ENCODE measurements at regions of chr1 and their contacts with region 1.

Region 1: DNA sequence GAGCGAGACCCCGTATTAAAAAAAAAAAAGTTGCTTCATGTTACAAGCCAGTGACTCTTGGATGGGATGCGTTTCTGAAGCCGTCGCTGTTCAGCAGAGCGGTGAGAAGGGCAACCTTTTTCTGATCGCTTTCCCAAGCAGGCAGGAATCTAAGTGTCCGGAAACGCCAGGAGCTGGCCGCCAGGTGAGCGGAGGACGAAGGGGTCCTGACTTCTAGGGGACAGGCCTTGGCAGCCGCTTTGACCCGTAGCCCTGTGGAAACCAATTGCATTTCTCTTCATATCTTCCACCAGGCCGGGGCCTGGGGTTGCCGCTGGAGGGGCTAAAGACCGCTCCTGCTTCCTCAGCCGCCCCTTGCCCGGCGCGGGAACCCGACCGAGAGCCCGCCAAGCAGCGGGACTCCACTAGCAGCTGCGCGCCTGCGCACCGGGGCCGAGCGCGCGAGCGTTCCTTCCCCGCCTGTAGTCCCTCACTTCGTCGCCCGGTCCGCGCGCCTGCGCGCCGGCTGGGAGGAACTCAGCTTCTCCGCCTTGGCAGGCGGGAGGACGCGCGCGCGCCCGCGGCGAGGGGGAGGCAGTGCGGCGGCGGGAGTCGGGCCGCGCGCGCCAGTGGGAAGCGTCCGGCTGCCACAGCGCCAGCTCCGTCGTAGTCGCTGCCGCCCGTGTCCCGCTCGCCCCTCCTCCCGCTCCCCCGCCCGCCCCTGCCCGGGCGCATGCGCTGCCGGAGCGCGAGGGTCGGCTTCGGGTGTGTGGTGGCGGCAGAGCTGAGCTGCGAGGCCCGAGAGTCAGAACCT is at the start of gene SPEN:
- DNase-seq: peak; percentile 91 to 99 (median 98)
- ATAC-seq: peak; percentile 83
- H3K4me3 ChIP-seq: peak within 1 kb of the TSS; percentile 98
- H3K4me3 Mint-ChIP-seq: peak within 1 kb of the TSS; percentile 97
- H3K27ac ChIP-seq: peak within 1 kb of the TSS; percentile 90 to 92
- H3K27ac Mint-ChIP-seq: peak within 1 kb of the TSS; percentile 96
- H3K4me1 ChIP-seq: peaks cover 42% of the 10 kb centered on the region
- H3K4me1 Mint-ChIP-seq: peaks cover 55% of the 10 kb centered on the region
- H3K27me3 ChIP-seq: no peaks in the 10 kb centered on the region
- H3K27me3 Mint-ChIP-seq: no peaks in the 10 kb centered on the region
- CTCF ChIP-seq: no peak
- total RNA-seq, gene SPEN: 73.5 to 76.7 TPM

Region 2: DNA sequence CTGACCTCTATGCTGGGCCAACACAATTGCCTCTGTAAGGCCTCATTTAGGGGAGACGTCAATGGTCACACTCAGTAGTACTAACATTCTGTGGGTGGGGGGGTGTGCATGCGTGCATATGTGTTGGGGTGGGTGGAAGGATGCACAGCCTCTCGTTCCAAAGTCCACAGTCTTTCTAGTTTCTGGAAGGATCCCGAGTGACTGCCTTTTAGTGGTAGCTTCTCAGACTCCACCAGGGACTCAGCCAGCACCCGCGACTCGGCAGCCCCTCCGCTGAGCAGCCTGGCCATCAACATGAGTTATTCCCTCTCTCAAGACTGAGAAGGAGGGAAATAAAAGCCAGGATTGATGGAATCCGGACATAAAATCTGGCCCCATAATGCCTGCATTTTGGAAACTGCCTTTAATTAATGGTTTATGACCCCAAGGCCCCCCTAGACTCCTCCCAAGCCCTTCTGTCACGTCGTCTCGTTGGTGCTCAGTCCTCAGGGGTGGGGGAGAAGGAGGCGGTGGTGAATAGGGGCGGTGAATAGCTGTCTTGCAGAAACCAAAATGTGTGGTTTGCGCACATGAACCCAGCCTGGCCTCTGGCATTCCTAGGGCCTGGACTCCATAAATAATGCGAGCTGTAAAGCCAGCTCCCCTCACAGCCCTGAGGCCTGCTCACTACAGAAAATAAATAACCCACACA is 758.9 kb before region 1 on chr1:
- CTCF ChIA-PET with region 1: no interaction called
- POLR2A ChIA-PET with region 1: no interaction called
- intact Hi-C with region 1: no loop called
- DNase-seq: no peak
- ATAC-seq: no peak
- H3K4me3 ChIP-seq: no peak overlapping the region
- H3K4me3 Mint-ChIP-seq: no peak overlapping the region
- H3K27ac ChIP-seq: no peak overlapping the region
- H3K27ac Mint-ChIP-seq: no peak overlapping the region
- H3K4me1 ChIP-seq: peaks cover 7% of the 10 kb centered on the region
- H3K4me1 Mint-ChIP-seq: peaks cover 5% of the 10 kb centered on the region
- H3K27me3 ChIP-seq: peaks cover 0 to 5% of the 10 kb centered on the region in 2 experiments
- H3K27me3 Mint-ChIP-seq: no peaks in the 10 kb centered on the region
- CTCF ChIP-seq: no peak

Region 3: DNA sequence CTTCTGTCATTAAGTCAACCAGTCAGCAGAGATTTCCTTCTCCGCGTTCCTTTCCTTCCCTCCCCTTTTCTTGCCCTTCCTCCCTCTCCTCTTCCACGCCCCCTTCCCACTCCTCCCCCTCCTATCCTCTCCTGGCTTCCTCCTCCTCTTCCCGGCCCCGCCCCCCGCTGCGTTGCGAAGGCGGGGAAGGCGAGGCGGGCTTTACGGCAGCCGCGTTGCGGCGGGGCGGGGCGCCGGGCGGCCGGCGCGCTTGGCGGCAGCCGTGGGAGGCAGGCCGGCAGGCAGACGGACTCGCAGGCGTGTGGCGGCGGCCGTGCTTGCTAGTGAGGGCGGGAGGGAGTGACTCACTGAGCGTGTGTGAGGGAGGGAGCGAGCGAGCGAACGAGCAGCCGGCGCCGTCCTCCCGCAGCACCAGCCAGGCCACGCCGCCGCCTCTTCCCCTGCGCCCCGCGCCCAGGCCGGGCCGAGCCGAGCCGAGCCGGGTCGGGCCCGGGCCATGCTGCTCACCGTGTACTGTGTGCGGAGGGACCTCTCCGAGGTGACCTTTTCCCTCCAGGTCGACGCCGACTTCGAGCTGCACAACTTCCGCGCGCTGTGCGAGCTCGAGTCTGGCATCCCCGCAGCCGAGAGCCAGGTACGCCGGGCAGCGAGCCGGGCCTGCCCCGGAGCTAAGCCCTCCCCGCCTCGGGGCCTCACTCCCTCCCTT is 230.0 kb before region 1 on chr1 and contains the start of gene DDI2:
- CTCF ChIA-PET with region 1: no interaction called
- POLR2A ChIA-PET with region 1: no interaction called
- intact Hi-C with region 1: no loop called
- DNase-seq: peak; percentile 84 to 97 (median 91)
- ATAC-seq: peak; percentile 90
- H3K4me3 ChIP-seq: peak within 1 kb of the TSS; percentile 91
- H3K4me3 Mint-ChIP-seq: peak within 1 kb of the TSS; percentile 97
- H3K27ac ChIP-seq: peak within 1 kb of the TSS; percentile 80 to 91
- H3K27ac Mint-ChIP-seq: peak within 1 kb of the TSS; percentile 89
- H3K4me1 ChIP-seq: peaks cover 45% of the 10 kb centered on the region
- H3K4me1 Mint-ChIP-seq: peaks cover 51% of the 10 kb centered on the region
- H3K27me3 ChIP-seq: no peaks in the 10 kb centered on the region
- H3K27me3 Mint-ChIP-seq: no peaks in the 10 kb centered on the region
- CTCF ChIP-seq: no peak
- total RNA-seq, gene DDI2: 24.2 to 29.9 TPM

Region 4: GRCh38 chr1:15820478-15820877 is 26.8 kb before region 1 on chr1:
- CTCF ChIA-PET with region 1: interaction called, 32 read pairs
- POLR2A ChIA-PET with region 1: interaction called, 25 read pairs
- intact Hi-C with region 1: loop called (anchors 2 to 5 kb)
- DNase-seq: no peak
- ATAC-seq: no peak
- H3K4me3 ChIP-seq: no peak overlapping the region
- H3K4me3 Mint-ChIP-seq: no peak overlapping the region
- H3K27ac ChIP-seq: no peak overlapping the region
- H3K27ac Mint-ChIP-seq: no peak overlapping the region
- H3K4me1 ChIP-seq: peaks cover 5% of the 10 kb centered on the region
- H3K4me1 Mint-ChIP-seq: peaks cover 4% of the 10 kb centered on the region
- H3K27me3 ChIP-seq: no peaks in the 10 kb centered on the region
- H3K27me3 Mint-ChIP-seq: no peaks in the 10 kb centered on the region
- CTCF ChIP-seq: no peak

Region 5: DNA sequence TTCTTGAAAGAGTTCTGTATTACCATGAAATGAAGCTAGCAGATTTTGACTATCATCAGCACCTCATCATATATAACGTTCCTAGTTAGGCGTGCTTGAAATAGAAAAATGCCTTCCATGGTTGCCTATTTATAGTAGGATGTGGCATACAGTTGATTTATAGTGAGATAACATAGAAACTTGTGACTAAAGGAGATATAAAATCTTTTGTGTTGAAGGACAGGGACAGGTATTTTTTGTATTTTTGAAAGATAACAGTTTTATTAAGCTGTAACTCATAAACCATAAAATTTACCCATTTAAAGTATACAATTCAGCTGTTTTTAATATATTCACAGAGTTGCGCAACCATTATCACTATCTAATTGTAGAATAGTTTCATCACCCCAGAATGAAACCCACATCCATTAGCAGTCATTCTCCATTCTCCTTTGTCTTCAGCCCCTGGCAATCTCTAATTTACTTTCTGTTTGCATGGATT is 19.5 kb after region 1 on chr1:
- CTCF ChIA-PET with region 1: no interaction called
- POLR2A ChIA-PET with region 1: interaction called, 19 read pairs
- intact Hi-C with region 1: no loop called
- DNase-seq: no peak
- ATAC-seq: no peak
- H3K4me3 ChIP-seq: no peak overlapping the region
- H3K4me3 Mint-ChIP-seq: no peak overlapping the region
- H3K27ac ChIP-seq: no peak overlapping the region
- H3K27ac Mint-ChIP-seq: no peak overlapping the region
- H3K4me1 ChIP-seq: peaks cover 19% of the 10 kb centered on the region
- H3K4me1 Mint-ChIP-seq: peaks cover 63% of the 10 kb centered on the region
- H3K27me3 ChIP-seq: no peaks in the 10 kb centered on the region
- H3K27me3 Mint-ChIP-seq: no peaks in the 10 kb centered on the region
- CTCF ChIP-seq: no peak

Region 6: DNA sequence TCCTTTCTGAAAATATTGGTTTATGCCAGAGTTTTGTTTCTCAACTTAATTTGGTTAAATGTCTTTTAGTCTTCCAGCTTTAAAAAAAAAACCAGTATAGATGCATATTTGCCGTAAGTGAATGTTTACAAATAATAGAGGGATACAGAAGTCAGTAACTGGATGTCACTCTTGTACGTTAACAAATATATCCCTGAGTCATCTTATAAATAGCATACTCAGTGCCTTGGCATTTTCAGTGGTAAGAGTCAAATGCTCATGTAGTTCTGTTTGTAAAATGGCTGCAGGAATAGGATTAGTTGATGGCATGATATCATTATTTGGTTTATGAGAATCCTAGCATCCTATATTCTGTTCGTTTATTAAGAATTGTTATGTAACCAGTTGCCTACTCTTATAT is 55.6 kb after region 1 on chr1:
- CTCF ChIA-PET with region 1: no interaction called
- POLR2A ChIA-PET with region 1: interaction called, 5 read pairs
- intact Hi-C with region 1: loop called in 1 of 2 experiments (anchors 10 kb)
- DNase-seq: no peak
- ATAC-seq: no peak
- H3K4me3 ChIP-seq: no peak overlapping the region
- H3K4me3 Mint-ChIP-seq: no peak overlapping the region
- H3K27ac ChIP-seq: no peak overlapping the region
- H3K27ac Mint-ChIP-seq: peak overlapping the region; percentile 53
- H3K4me1 ChIP-seq: no peaks in the 10 kb centered on the region
- H3K4me1 Mint-ChIP-seq: peaks cover 34% of the 10 kb centered on the region
- H3K27me3 ChIP-seq: no peaks in the 10 kb centered on the region
- H3K27me3 Mint-ChIP-seq: no peaks in the 10 kb centered on the region
- CTCF ChIP-seq: no peak

Region 7: GRCh38 chr1:15975805-15976680 is 128.7 kb after region 1 on chr1 and contains the start of gene ZBTB17:
- CTCF ChIA-PET with region 1: interaction called, 3 read pairs
- POLR2A ChIA-PET with region 1: interaction called, 14 read pairs
- intact Hi-C with region 1: loop called in 1 of 2 experiments (anchors 5 kb)
- DNase-seq: peak; percentile 91 to 99 (median 94)
- ATAC-seq: peak; percentile 92
- H3K4me3 ChIP-seq: peak within 1 kb of the TSS; percentile 91
- H3K4me3 Mint-ChIP-seq: peak within 1 kb of the TSS; percentile 99
- H3K27ac ChIP-seq: peak within 1 kb of the TSS; percentile 67 to 70
- H3K27ac Mint-ChIP-seq: peak within 1 kb of the TSS; percentile 92
- H3K4me1 ChIP-seq: peaks cover 37% of the 10 kb centered on the region
- H3K4me1 Mint-ChIP-seq: peaks cover 34% of the 10 kb centered on the region
- H3K27me3 ChIP-seq: no peaks in the 10 kb centered on the region
- H3K27me3 Mint-ChIP-seq: no peaks in the 10 kb centered on the region
- CTCF ChIP-seq: no peak
- total RNA-seq, gene ZBTB17: 70.2 to 78.1 TPM

Region 8: DNA sequence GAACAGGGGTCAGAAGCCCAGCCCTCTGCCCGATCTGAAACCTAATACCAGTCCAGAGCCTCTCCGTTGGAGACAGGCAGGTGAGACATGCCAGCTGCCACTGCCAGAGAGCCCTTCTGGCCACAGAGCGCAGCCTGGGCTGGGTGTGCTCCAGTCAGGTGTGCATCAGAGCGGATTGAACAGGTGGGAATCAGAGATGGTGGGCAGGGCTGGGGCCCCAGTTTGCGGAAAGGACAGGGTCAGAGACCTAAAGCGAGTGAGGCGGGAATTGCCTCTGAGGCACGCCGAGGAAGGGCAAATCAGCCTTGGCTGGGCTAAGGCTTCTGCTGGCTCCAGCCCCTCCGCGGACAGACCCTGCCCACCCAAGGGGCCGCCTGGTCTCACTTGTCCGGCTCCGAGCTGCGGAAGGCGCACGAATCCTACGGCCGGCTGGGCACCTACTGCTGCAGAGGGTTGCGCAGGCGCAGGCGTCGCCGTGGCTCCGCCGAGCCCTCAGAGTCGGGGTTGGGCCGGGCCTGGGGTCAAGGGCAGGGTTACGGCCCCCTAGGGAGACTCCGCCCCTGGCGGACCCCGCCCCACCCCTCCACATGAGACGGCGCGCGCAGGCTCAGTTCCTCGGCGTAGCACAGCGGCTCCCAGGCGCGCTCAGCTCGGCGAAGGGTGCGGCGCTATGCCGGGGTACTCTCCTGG is 379.3 kb after region 1 on chr1:
- CTCF ChIA-PET with region 1: no interaction called
- POLR2A ChIA-PET with region 1: no interaction called
- intact Hi-C with region 1: no loop called
- DNase-seq: no peak
- ATAC-seq: no peak
- H3K4me3 ChIP-seq: no peak overlapping the region
- H3K4me3 Mint-ChIP-seq: no peak overlapping the region
- H3K27ac ChIP-seq: no peak overlapping the region
- H3K27ac Mint-ChIP-seq: no peak overlapping the region
- H3K4me1 ChIP-seq: peaks cover 18% of the 10 kb centered on the region
- H3K4me1 Mint-ChIP-seq: no peaks in the 10 kb centered on the region
- H3K27me3 ChIP-seq: peaks cover 33 to 34% of the 10 kb centered on the region in 2 experiments
- H3K27me3 Mint-ChIP-seq: peaks cover 46% of the 10 kb centered on the region
- CTCF ChIP-seq: no peak

Region 9: DNA sequence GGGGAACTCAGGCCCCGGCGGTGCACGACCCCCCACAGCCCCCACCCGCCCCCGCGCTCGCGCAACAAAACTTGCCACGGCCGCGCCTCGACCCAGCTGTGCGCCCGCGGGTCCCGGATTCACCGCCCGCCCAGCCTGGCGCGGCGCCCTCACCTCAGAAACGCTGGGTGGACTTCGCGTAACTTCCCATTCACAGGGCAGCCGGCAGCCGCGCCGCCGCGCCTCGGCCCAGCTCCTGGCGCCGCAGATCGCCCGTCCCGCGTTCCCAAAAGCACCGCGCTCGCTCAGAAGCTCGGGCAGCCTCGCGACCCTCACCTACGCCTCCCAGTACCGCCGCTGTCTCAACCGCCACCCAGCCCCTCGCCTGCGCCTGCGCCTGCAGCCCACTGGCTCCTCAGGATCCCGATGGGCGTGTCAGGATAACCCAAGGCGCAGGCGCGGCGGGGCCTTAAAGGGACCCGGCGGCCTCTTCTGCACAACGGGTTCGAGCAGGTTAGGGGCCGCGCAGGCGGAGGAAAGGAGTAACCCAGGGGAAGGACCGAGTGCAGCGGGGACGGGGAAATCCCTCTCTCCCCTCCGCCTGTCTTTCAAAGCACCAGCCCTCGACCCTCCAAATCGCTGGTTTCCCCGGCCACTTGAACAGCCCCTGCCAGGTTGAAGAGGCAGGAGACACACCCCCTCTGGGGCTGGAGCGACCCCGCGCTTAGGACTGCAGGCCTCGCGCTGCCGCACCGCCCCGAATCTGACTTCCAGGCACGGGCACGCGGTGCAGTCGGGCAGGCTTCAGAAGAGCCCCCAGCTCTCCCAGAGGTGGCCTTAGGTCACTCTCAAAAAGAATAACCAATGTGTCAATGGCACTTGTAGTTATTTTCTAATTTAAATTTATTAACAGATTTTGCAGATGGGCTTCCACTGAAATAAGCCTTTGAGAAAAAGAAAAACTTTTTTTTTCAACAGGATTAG is 766.2 kb after region 1 on chr1 and contains the start of gene NBPF1:
- CTCF ChIA-PET with region 1: no interaction called
- POLR2A ChIA-PET with region 1: no interaction called
- intact Hi-C with region 1: no loop called
- DNase-seq: peak; percentile 76 to 97 (median 87)
- ATAC-seq: peak; percentile 94
- H3K4me3 ChIP-seq: peak within 1 kb of the TSS; percentile 63
- H3K4me3 Mint-ChIP-seq: no peak within 1 kb of the TSS
- H3K27ac ChIP-seq: peak within 1 kb of the TSS in 1 of 2 donors; percentile 11
- H3K27ac Mint-ChIP-seq: no peak within 1 kb of the TSS
- H3K4me1 ChIP-seq: peaks cover 22% of the 10 kb centered on the region
- H3K4me1 Mint-ChIP-seq: no peaks in the 10 kb centered on the region
- H3K27me3 ChIP-seq: peaks cover 2 to 9% of the 10 kb centered on the region in 2 experiments
- H3K27me3 Mint-ChIP-seq: no peaks in the 10 kb centered on the region
- CTCF ChIP-seq: no peak
- total RNA-seq, gene NBPF1: 15.0 to 15.9 TPM

Region 10: GRCh38 chr1:16913833-16914662 is 1066.8 kb after region 1 on chr1:
- CTCF ChIA-PET with region 1: no interaction called
- POLR2A ChIA-PET with region 1: no interaction called
- intact Hi-C with region 1: loop called in 1 of 2 experiments (anchors 5 kb)
- DNase-seq: peak; percentile 80 to 100 (median 96)
- ATAC-seq: peak; percentile 93
- H3K4me3 ChIP-seq: peak overlapping the region; percentile 67
- H3K4me3 Mint-ChIP-seq: peak overlapping the region; percentile 93
- H3K27ac ChIP-seq: peak overlapping the region in 1 of 2 donors; percentile 46
- H3K27ac Mint-ChIP-seq: peak overlapping the region; percentile 79
- H3K4me1 ChIP-seq: peaks cover 37% of the 10 kb centered on the region
- H3K4me1 Mint-ChIP-seq: peaks cover 42% of the 10 kb centered on the region
- H3K27me3 ChIP-seq: no peaks in the 10 kb centered on the region
- H3K27me3 Mint-ChIP-seq: no peaks in the 10 kb centered on the region
- CTCF ChIP-seq: no peak